ENCODE measurements at regions of chr10 and their contacts with region 1.

Region 1: DNA sequence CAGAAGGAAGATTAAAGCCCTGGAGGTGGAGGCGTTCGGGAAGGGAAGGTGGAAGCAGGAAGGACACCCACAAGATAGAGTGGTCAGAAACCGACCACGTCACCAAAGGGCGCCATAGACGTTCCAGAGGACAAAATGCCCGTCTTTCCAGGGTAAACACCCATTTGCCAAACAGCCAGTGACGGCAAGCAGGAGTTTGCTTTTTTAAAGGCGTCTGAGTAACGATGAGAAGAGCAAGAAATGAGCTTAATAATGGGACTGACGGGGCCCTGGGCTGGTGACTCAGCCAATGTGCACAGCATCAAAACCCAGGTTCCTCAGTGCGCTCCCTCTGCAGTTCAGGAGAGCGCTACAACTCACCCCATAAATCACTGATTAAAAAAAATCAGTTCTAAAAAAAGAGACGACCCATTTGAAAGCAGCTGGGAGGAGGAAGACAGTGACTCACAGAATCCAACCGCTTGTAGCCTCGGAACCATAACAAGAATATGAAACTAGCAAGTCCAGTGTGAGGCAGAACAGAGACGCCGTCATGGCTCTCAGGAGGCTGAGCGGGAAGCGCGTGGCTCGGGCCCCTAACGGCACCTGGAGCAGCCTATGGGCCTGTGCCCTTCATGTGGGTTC is 5.9 kb downstream of the DIP2C start:
- DNase-seq: peak; percentile 72 to 86
- ATAC-seq: peak; percentile 87
- H3K4me3 ChIP-seq: no peak overlapping the region
- H3K27ac ChIP-seq: peak overlapping the region; percentile 15 to 49
- H3K4me1 ChIP-seq: no peaks in the 10 kb centered on the region
- H3K27me3 ChIP-seq: no peaks in the 10 kb centered on the region

Region 2: DNA sequence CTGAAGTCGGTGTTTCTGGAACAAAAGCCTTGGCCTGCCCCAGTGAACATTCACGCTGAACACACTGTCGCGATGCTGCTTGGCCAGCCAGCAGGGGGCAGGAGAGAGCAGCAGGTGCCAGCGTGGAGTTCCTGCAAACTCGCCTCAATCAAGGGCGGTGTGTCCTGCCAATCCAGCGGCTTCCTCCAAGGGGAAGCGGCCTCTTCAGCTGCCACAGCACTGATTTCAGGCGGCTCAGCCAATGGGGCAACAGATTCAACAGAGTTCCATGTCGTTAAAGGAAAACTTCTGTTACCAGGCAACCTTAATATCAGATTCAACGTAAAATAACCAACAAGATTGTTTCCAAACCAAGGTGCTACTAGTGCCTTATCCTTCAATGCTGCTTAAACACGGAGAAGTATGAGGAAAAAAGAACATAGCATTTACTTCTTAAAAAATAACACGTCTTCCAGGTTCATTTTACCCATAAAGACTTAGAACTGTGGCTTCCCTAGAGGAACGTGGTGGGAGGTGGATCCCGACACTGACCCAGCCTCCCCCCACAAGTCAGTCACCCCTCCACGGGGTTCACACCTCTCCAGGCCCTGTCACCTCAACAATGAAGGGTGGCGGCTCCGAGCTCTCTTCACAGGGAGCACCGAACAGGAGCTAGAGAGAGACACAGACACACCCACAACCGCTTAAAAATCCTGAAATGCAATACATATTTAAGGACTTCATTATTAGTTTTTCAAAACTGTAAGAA is 172.3 kb before region 1 on chr10:
- intact Hi-C with region 1: loop called (anchors 2 to 5 kb)
- DNase-seq: peak; percentile 95 to 99
- ATAC-seq: peak; percentile 93
- H3K4me3 ChIP-seq: no peak overlapping the region
- H3K27ac ChIP-seq: no peak overlapping the region
- H3K4me1 ChIP-seq: no peaks in the 10 kb centered on the region
- H3K27me3 ChIP-seq: no peaks in the 10 kb centered on the region

Region 3: GRCh38 chr10:613271-614138 is 70.1 kb before region 1 on chr10:
- intact Hi-C with region 1: loop called in 1 of 2 experiments (anchors 5 kb)
- DNase-seq: peak; percentile 44 to 72
- ATAC-seq: peak; percentile 52
- H3K4me3 ChIP-seq: no peak overlapping the region
- H3K27ac ChIP-seq: peak overlapping the region in 1 of 2 donors; percentile 32
- H3K4me1 ChIP-seq: peaks cover 2 to 4% of the 10 kb centered on the region in 2 donors
- H3K27me3 ChIP-seq: no peaks in the 10 kb centered on the region

Measured in aorta (tissue), 5 donors.